IMR-90 (cell line): ENCODE measurements at regions of chr16 and their contacts with region 1.

Region 1: DNA sequence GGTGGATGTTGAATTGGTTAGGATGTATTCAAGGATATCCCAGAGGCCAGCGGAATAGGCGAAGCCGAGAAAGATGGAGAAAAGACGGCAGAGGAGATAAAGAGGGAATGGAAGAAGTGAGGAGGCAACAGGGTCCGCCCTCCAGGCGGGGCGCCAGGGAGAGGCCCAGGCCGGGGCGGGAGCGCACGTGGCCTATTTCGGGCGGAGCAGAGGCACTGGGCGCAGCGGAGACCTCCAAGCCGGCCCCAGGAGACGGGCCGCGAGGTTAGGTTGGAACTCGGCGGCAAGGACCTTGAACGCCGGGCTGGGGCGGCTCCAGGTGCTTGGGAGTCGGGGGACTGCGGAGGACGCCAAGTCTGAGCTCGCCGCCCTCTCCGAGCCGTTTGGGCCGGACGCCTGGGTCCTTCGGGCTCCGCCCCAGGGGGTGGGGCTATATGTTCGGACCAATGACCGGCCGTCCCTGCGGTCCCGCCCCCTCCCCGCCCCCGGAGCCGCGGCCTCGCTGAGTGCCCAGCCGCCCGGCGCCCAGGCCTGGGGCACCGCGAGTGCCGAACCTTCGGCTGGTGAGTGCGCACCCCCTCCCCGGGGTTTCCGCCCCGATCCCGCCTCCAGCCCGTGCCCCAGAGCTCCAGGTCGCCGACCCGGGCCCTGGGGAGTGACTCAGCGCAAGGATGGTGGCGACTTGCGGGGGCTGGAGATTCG is at the start of gene ZNF771:
- DNase-seq: peak; percentile 76
- ATAC-seq: peak; percentile 96
- H3K4me3 ChIP-seq: peak within 1 kb of the TSS; percentile 71
- H3K27ac ChIP-seq: peak within 1 kb of the TSS; percentile 84
- H3K4me1 ChIP-seq: peaks cover 11% of the 10 kb centered on the region
- H3K27me3 ChIP-seq: no peaks in the 10 kb centered on the region
- CTCF ChIP-seq: no peak
- POLR2A ChIP-seq: peak; percentile 64; the same call in 1 of the 2 replicates
- RAD21 ChIP-seq: no peak
- total RNA-seq, gene ZNF771: 5.2 and 5.8 TPM in 2 replicates

Region 2: GRCh38 chr16:30091474-30092372 is 315.5 kb before region 1 on chr16 and contains the start of gene TBX6:
- CTCF ChIA-PET with region 1: interaction called, 4 read pairs
- POLR2A ChIA-PET with region 1: interaction called, 5 read pairs
- dilution Hi-C with region 1: no loop called
- in situ Hi-C with region 1: no loop called
- intact Hi-C with region 1: loop called (anchors 10 kb)
- DNase-seq: peak; percentile 81
- ATAC-seq: peak; percentile 92
- H3K4me3 ChIP-seq: peak within 1 kb of the TSS; percentile 42
- H3K27ac ChIP-seq: peak within 1 kb of the TSS; percentile 2; the same call in 1 of the 2 replicates
- H3K4me1 ChIP-seq: peaks cover 14% of the 10 kb centered on the region
- H3K27me3 ChIP-seq: no peaks in the 10 kb centered on the region
- CTCF ChIP-seq: peak; percentile 89
- POLR2A ChIP-seq: no peak
- RAD21 ChIP-seq: peak; percentile 82
- total RNA-seq, gene TBX6: not detected in 2 replicates

Region 3: GRCh38 chr16:30183233-30184095 is 223.8 kb before region 1 on chr16 and contains the start of gene CORO1A:
- CTCF ChIA-PET with region 1: no interaction called
- POLR2A ChIA-PET with region 1: no interaction called
- dilution Hi-C with region 1: no loop called
- in situ Hi-C with region 1: loop called (anchors 25 kb)
- intact Hi-C with region 1: no loop called
- DNase-seq: peak; percentile 67
- ATAC-seq: peak; percentile 98
- H3K4me3 ChIP-seq: peak within 1 kb of the TSS; percentile 88
- H3K27ac ChIP-seq: peak within 1 kb of the TSS; percentile 77
- H3K4me1 ChIP-seq: peaks cover 2% of the 10 kb centered on the region; the same call in 1 of the 2 replicates
- H3K27me3 ChIP-seq: no peaks in the 10 kb centered on the region
- CTCF ChIP-seq: no peak
- POLR2A ChIP-seq: no peak
- RAD21 ChIP-seq: no peak
- total RNA-seq, gene CORO1A: 6.4 and 7.2 TPM in 2 replicates

Region 4: GRCh38 chr16:30378236-30379204 is 28.7 kb before region 1 on chr16:
- CTCF ChIA-PET with region 1: no interaction called
- POLR2A ChIA-PET with region 1: no interaction called
- dilution Hi-C with region 1: no loop called
- in situ Hi-C with region 1: no loop called
- intact Hi-C with region 1: no loop called
- DNase-seq: peak; percentile 94
- ATAC-seq: peak; percentile 98
- H3K4me3 ChIP-seq: peak overlapping the region; percentile 71
- H3K27ac ChIP-seq: peak overlapping the region; percentile 83
- H3K4me1 ChIP-seq: peaks cover 7% of the 10 kb centered on the region
- H3K27me3 ChIP-seq: no peaks in the 10 kb centered on the region
- CTCF ChIP-seq: peak; percentile 35
- POLR2A ChIP-seq: peak; percentile 30; the same call in 1 of the 2 replicates
- RAD21 ChIP-seq: peak; percentile 28; the same call in 1 of the 2 replicates

Region 5: DNA sequence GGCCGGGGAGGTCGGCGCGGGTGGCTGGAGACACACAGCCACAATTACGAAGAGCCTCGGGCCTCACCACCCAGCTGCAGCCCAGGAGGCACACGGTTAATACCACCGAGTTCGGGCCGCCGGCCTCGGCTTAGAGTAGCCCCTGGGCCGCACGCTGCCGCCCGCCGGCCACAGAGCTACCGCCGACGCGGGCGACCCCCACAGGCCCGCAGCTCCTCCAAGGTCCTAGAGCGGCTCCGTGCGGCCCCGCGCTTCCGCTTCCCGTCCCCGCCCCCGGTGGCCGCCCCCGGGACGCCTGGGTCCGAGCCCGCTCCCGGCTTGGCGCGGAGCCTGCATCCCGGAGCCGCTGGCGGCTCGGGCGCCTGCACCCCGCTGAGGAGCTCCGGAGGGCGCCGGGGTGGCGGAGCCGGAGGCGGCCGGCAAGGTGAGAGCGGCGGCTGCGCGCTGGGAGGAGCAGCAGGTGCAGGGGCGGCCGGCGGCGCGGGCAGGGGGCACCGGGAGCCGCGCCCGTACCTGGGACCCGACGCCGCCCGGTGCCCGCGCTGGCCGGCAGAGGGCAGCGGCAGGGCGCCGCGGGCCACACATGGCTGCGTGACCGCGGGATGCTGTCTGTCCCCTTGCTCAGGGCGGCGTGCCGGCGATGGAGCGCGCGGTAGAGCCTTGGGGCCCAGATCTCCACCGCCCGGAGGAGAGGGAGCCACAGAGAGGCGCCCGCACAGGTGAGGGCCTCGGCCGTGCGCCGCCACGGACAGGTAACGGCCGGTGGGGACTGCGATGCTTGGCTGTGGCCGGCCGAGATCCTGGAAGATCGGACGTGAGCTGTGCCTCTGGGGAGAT is 11.9 kb before region 1 on chr16 and contains the start of gene ZNF48:
- CTCF ChIA-PET with region 1: interaction called, 6 read pairs
- POLR2A ChIA-PET with region 1: interaction called, 7 read pairs
- dilution Hi-C with region 1: no loop called
- in situ Hi-C with region 1: no loop called
- intact Hi-C with region 1: loop called (anchors 2 kb)
- DNase-seq: peak; percentile 90
- ATAC-seq: peak; percentile 93
- H3K4me3 ChIP-seq: peak within 1 kb of the TSS; percentile 95
- H3K27ac ChIP-seq: peak within 1 kb of the TSS; percentile 82
- H3K4me1 ChIP-seq: peaks cover 10% of the 10 kb centered on the region
- H3K27me3 ChIP-seq: no peaks in the 10 kb centered on the region
- CTCF ChIP-seq: peak; percentile 38
- POLR2A ChIP-seq: no peak
- RAD21 ChIP-seq: peak; percentile 16
- total RNA-seq, gene ZNF48: 6.6 and 6.9 TPM in 2 replicates